GM12878 (cell line): ENCODE measurements at regions of chr5 and their contacts with region 1.

Region 1: GRCh38 chr5:88680253-88681132 is 202.5 kb downstream of the MEF2C start:
- DNase-seq: no peak
- ATAC-seq: peak; percentile 90
- H3K4me3 ChIP-seq: peak overlapping the region; percentile 72
- H3K27ac ChIP-seq: no peak overlapping the region
- H3K4me1 ChIP-seq: no peaks in the 10 kb centered on the region
- H3K27me3 ChIP-seq: peaks cover 18 to 32% of the 10 kb centered on the region in 2 experiments
- CTCF ChIP-seq: peak; percentile 85 to 95 (median 93)
- EP300 ChIP-seq: no peak
- POLR2A ChIP-seq: no peak
- RAD21 ChIP-seq: peak; percentile 88

Region 2: GRCh38 chr5:87412630-87413342 is 1267.7 kb before region 1 on chr5 and contains the start of gene CCNH:
- CTCF ChIA-PET with region 1: no interaction called
- POLR2A ChIA-PET with region 1: no interaction called
- RAD21 ChIA-PET with region 1: no interaction called
- SMC1A ChIA-PET with region 1: no interaction called
- in situ Hi-C with region 1: loop called (anchors 10 kb)
- intact Hi-C with region 1: no loop called
- DNase-seq: peak; percentile 93
- ATAC-seq: peak; percentile 95
- H3K4me3 ChIP-seq: peak within 1 kb of the TSS; percentile 93
- H3K27ac ChIP-seq: peak within 1 kb of the TSS; percentile 95
- H3K4me1 ChIP-seq: peaks cover 3% of the 10 kb centered on the region; the same call in 1 of the 2 replicates
- H3K27me3 ChIP-seq: no peaks in the 10 kb centered on the region
- CTCF ChIP-seq: no peak
- EP300 ChIP-seq: no peak
- POLR2A ChIP-seq: peak; percentile 97
- RAD21 ChIP-seq: no peak
- polyA plus RNA-seq, gene CCNH: 110 to 116 TPM

Region 3: GRCh38 chr5:88140856-88141752 is 539.4 kb before region 1 on chr5:
- CTCF ChIA-PET with region 1: interaction called, 11 read pairs
- POLR2A ChIA-PET with region 1: no interaction called
- RAD21 ChIA-PET with region 1: interaction called, 3 read pairs
- SMC1A ChIA-PET with region 1: no interaction called
- in situ Hi-C with region 1: loop called (anchors 5 kb)
- intact Hi-C with region 1: loop called (anchors 1 kb)
- DNase-seq: peak; percentile 8
- ATAC-seq: peak; percentile 91
- H3K4me3 ChIP-seq: no peak overlapping the region
- H3K27ac ChIP-seq: no peak overlapping the region
- H3K4me1 ChIP-seq: no peaks in the 10 kb centered on the region
- H3K27me3 ChIP-seq: peaks cover 11 to 29% of the 10 kb centered on the region in 2 experiments
- CTCF ChIP-seq: peak; percentile 24 to 59 (median 58); a peak in 4 of 6 replicates
- EP300 ChIP-seq: no peak
- POLR2A ChIP-seq: no peak
- RAD21 ChIP-seq: peak; percentile 47; the same call in 1 of the 2 replicates

Region 4: DNA sequence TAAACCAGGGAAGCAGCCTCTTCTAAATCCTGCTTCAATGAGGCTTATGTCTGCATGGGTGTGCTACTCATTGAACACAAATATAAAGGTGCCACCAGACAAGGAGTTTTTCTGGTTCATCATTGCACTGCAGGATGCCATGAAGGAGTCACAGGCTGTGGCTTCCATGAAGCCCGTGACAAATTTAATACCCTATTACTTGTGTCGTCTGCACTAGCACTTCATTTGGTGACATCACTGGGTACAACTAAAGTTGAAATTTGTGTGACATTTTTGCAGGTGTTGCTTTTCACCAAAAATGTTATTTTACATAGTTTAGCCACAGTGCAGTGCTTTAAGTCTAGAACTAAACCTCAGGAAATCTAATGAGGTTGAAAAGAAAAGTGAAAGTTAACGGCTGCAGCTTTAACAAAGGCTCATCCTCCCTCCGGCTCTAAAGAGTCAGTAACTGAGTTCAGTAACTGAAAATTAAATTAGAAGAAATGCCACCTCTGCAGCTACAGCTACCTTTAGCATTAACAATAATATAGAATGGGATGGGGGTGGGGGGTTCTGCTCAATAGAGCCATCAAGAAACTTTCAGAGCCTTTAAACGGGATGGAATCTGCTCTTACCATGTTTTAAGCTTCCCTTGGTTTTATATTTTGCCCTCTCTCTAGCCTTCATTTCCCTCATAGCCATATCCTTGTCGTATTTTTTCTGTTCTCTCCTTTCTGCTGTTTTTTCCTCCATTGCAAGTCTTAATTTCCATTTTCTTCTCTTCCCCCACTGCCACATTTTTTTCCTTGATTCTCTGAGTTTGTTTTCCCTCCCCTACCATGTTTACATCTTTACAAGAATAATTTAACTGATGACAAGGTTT is 178.1 kb before region 1 on chr5:
- CTCF ChIA-PET with region 1: no interaction called
- POLR2A ChIA-PET with region 1: no interaction called
- RAD21 ChIA-PET with region 1: no interaction called
- SMC1A ChIA-PET with region 1: no interaction called
- in situ Hi-C with region 1: no loop called
- intact Hi-C with region 1: loop called (anchors 10 kb)
- DNase-seq: peak; percentile 20
- ATAC-seq: peak; percentile 91
- H3K4me3 ChIP-seq: peak overlapping the region; percentile 57
- H3K27ac ChIP-seq: peak overlapping the region; percentile 59
- H3K4me1 ChIP-seq: no peaks in the 10 kb centered on the region
- H3K27me3 ChIP-seq: no peaks in the 10 kb centered on the region
- CTCF ChIP-seq: no peak
- EP300 ChIP-seq: no peak
- POLR2A ChIP-seq: no peak
- RAD21 ChIP-seq: no peak

Region 5: DNA sequence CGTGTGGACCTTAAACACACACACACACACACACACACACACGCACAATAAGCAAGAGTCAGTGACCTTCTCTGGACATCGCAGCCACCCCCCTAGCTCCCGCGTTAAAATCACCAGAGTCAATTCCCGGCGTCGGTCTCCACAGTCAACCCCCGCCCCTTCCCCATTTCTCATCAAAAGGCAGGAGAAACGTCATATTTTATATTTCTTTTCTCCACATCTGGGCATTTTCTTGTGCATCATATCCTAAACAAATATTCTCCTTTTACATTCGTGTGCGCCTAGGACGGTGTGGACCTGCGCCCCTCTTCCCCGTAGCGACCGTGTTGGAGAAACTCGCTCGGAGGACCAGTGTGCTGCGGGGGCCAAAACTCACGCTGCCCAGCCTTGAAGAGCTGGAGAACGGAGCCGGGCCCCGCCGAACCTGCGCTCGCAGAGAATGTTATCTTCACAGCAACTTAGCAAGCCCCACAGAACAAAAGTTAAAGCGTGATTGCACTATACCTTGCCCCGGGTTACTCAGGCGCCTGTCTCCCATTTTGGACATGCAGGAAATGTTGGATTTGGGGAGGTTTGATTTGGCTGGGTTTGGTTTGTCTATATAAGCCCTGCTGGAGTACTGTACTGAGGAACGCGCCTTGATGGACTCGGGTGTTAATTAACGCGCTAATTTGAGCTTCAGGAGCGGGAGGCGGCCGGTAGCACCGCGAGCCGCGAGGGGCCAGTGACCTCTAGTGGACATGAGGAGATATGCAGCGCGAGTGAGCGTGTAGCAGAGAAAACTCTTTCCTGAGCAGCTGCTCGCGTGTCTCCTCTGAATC is 10.1 kb after region 1 on chr5:
- CTCF ChIA-PET with region 1: interaction called, 28 read pairs
- POLR2A ChIA-PET with region 1: no interaction called
- RAD21 ChIA-PET with region 1: interaction called, 5 read pairs
- SMC1A ChIA-PET with region 1: interaction called, 18 read pairs
- in situ Hi-C with region 1: no loop called
- intact Hi-C with region 1: no loop called
- DNase-seq: no peak
- ATAC-seq: peak; percentile 93
- H3K4me3 ChIP-seq: peak overlapping the region; percentile 20; the same call in 1 of the 2 replicates
- H3K27ac ChIP-seq: no peak overlapping the region
- H3K4me1 ChIP-seq: no peaks in the 10 kb centered on the region; the same call in 1 of the 2 replicates
- H3K27me3 ChIP-seq: peaks cover 27 to 40% of the 10 kb centered on the region in 2 experiments
- CTCF ChIP-seq: peak; percentile 96 to 98 (median 97)
- EP300 ChIP-seq: no peak
- POLR2A ChIP-seq: no peak
- RAD21 ChIP-seq: peak; percentile 84